GM18951 (cell line): ENCODE measurements at regions of chrX and their contacts with region 1.

Region 1: DNA sequence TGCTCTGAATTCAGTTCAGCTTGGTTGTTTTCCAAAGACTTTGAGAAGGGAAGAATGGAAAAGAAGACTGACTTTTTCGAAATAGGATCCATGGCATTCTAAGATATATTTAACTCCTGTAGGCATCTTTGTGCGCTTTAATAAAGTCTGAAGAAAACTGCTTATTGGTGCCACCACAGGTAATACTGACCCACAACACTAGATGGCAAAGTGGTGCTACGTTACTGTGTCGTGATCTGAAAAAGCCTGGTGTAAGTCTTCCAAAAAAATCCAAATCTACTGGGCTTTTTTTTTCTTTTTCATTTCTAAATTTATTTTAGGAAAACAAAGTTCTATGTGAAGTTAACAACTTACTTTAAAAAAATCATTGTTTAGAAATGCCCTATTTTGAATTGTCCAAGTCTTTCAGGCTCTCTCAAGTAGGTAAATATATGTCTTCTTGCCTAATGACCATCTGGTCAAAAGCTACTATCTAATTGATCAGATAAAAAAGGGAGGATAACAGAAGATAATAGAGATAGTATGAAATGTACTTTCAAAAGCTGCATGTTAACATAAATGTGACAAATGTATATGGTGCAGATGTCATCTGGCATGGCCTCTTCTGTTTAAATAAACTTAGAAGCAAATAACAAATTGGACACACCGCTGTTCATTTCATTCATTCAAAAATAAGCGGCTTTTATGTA is 47.0 kb upstream of the MID1IP1 start:
- POLR2A ChIP-seq: no peak

Region 2: GRCh38 chrX:38985375-38985774 is 231.1 kb after region 1 on chrX:
- in situ Hi-C with region 1: loop called (anchors 25 kb)
- POLR2A ChIP-seq: no peak

Region 3: DNA sequence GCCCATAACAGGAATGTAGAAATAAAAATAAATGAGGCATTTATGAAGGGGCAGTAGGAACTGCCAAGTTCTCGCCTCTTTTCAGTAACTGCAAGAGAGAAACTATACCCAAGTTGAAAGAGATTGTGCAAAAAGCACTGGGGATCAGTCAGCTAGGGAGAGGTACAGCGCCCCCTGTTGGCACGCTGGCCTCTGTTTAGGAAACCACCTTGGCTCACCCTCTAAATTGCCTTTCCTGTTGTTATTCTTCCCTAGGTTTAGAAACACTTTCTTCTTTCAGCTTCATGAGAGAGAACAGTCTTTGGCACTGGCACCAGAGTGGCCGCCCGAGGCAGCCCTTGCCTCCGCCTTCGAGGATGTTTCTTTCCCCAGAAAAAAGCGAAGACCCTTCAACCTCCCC is 395.5 kb after region 1 on chrX:
- in situ Hi-C with region 1: loop called (anchors 25 kb)
- POLR2A ChIP-seq: no peak

Region 4: GRCh38 chrX:39592776-39593175 is 838.5 kb after region 1 on chrX:
- in situ Hi-C with region 1: no loop called
- POLR2A ChIP-seq: no peak